ENCODE measurements at regions of chr16 and their contacts with region 1.

Region 1: DNA sequence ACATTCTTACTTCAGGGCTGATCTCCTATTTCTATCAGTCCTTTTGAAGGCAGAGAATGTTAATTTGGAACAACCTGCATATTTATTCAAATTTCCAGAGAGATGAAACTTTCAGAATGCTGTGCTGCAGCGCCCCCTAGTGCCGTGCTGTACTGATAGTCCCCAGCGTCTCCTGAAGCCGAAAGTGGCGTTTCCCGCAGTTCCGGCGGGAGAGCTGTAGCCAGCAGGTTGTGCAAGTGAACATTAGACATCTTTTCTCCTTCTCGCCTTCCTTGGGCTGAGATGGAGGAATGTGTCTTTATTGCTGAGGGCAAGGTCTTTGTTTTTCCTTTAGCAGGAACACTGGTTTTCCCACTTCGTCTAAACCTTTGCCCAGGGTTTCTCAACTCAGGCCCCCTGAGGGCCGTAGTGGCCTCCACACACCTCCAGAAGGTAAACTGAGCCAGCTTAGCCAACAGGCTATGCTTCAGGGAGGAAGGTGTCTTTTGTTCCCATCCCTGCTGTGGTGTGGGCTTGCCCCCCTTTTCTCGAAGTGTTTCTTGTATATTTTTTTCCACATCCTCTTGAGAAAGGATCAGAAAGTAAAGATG is 26.4 kb downstream of the USP10 start:
- DNase-seq: peak; percentile 54
- CTCF ChIP-seq: peak; percentile 86

Region 2: GRCh38 chr16:84504420-84505248 is 221.5 kb before region 1 on chr16 and contains the start of gene MEAK7:
- CTCF ChIA-PET with region 1: interaction called, 15 read pairs
- POLR2A ChIA-PET with region 1: no interaction called
- DNase-seq: peak; percentile 99
- CTCF ChIP-seq: no peak

Region 3: DNA sequence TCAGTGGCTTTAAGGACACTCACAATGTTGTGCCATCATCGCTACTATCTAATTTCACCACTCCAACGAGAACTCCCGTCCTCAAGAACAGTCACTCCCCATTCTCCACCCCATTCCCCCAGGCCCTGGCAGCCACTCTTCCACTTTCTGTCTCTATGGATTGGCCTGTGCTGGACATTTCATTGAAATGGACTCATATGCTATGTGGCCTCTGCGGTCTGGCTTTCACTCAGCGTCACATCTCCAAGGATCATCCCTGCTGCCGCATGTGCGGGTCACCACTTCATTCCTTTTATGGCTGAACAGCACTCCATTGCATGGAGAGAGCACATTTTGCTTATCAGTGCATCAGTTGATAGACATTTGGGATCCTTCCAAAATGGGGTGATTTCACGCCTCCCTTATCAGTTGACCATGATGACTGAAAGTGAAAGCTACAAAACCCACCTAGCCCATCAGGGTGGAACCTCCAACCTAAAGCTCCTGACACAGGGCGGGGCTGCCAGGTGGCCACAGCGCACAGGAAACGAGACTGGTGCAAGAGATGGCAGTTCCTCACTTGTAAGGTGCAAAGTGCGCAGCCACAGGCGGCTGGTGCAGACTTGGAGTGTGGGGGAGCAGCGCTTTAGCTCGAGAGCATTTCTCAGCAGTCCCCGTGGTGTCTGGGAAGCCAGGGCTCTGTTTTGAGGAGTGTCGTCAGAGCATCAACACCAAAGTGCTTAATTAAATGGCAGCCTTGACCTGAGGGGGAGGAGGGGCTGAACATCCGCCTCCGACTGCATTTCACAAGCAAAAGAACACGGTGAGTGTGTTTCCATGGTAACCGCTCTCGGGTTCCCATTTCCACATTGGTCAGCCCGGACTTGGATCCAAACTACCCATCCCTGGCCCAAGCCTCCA is 132.1 kb before region 1 on chr16:
- CTCF ChIA-PET with region 1: no interaction called
- POLR2A ChIA-PET with region 1: no interaction called
- DNase-seq: peak; percentile 86
- CTCF ChIP-seq: no peak

Region 4: DNA sequence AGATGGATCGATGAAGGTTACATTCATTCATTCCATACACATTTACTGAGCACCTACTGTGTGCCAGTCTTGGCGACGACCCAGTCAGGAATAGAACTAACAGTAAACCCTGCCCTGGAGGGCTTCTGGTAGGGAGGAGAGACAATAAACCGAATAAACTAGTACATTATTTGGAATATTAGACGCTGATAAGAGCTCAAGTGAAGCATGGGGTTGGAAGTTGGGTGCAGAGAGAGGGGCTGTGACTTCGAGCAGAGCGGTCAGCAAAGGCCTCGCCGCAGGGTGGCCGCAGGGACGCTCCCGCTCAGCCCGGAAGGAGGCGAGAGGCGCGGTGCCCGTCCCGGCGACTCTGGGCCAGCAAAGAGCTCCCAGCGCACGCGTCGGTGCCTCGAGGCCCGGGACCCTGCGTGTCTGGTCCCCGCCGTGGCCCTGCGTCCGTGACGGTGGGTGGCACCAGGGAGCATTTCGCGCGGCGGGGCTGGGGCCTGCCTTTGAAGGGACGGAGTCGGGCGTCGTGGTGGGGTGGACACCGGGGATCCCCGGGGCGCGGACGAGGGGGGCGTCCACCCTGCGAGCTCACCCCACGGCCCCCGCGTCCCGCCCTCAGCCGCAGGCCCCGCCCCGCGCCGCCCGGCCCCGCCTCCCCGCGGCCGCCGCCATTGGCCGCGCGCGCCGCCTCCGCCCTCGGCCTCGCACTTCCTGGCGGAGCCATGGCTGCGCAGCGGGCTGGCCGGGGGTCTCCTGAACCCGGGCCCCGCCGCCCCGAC is 78.2 kb before region 1 on chr16 and contains the start of gene KLHL36:
- CTCF ChIA-PET with region 1: interaction called, 12 read pairs
- POLR2A ChIA-PET with region 1: no interaction called
- DNase-seq: peak; percentile 95
- CTCF ChIP-seq: no peak

Region 5: DNA sequence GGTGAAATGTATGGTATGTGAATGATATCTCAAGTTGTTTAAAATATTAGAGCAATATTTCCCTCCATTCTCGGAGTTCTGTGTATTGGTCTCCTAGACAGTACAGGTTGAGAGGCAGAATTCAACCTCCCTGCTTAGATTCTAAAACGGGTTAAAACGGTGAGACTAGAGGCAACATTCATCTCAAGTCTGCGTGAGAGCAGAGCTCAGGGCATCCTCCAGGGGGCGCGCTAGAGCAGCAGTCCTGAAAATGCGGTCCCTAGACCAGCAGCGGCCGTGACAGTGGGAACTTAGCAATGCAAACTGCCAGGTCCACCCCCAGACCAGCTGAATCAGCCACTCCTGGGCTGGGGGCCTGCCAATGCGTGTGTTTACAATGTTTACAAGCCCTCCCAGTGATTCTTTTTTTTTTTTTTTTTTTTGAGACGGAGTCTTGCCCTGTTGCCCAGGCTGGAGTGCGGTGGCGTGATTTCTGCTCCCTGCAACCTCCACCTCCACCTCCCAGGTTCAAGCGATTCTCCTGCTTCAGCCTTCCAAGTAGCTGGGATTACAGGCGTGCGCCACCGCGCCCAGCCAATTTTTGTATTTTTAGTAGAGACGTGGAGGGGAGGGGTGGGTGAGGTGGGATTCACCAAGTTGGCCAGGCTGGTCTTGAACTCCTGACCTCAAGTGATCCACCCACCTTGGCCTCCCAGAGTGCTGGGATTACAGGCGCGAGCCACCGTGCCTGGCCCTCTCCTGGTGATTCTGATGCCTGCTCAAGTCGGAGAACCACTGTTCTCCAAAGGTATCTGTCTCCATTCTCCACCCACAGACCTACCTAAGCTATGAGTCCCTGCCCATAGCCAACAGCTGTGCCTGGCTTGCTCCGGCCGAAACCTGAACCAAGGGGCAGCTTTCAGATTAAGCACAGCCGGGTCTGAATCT is 53.6 kb before region 1 on chr16:
- CTCF ChIA-PET with region 1: interaction called, 49 read pairs
- POLR2A ChIA-PET with region 1: no interaction called
- DNase-seq: peak; percentile 89
- CTCF ChIP-seq: peak; percentile 92

Region 6: DNA sequence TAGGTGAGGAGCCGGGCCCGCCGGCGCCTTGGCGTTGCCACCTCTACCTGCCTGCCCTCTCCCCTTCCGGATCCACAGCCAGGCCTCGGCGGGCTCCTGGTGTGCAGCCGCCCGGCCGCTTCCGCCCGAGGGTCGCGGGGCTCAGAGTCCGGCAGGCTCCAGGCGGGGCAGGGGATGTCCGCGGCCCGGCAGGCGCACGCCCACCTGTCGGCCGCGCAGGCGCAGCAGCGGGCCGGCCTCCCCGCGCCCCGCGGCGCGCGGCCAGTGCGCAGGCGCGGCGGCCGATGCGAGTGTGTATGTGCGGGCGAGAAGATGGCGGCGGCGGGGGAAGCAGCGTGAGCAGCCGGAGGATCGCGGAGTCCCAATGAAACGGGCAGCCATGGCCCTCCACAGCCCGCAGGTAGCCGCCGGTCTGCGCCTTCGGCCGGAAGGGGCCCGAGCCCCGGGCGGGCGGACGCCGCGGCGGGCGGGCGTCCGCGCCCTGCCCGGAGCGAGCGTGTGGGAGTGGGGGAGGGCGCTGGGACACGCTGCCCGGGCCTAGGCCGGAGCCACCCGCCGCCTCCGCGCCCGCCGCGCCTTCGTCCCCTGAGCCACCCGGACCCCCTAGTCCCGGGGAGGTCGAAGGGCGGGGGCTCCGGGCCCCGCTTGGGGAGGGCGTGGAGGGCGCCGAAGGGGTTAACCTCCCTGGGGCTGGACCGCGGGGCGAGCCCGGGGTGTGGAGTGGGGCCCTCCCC is 26.3 kb before region 1 on chr16 and contains the start of gene USP10:
- CTCF ChIA-PET with region 1: interaction called, 44 read pairs
- POLR2A ChIA-PET with region 1: no interaction called
- DNase-seq: peak; percentile 99
- CTCF ChIP-seq: no peak

Region 7: GRCh38 chr16:84746882-84747281 is 20.7 kb after region 1 on chr16:
- CTCF ChIA-PET with region 1: interaction called, 202 read pairs
- POLR2A ChIA-PET with region 1: no interaction called
- DNase-seq: no peak
- CTCF ChIP-seq: no peak